Right ventricle myocardium superior (tissue), 1 donor: ENCODE measurements at regions of chr19 and their contacts with region 1.

Region 1: DNA sequence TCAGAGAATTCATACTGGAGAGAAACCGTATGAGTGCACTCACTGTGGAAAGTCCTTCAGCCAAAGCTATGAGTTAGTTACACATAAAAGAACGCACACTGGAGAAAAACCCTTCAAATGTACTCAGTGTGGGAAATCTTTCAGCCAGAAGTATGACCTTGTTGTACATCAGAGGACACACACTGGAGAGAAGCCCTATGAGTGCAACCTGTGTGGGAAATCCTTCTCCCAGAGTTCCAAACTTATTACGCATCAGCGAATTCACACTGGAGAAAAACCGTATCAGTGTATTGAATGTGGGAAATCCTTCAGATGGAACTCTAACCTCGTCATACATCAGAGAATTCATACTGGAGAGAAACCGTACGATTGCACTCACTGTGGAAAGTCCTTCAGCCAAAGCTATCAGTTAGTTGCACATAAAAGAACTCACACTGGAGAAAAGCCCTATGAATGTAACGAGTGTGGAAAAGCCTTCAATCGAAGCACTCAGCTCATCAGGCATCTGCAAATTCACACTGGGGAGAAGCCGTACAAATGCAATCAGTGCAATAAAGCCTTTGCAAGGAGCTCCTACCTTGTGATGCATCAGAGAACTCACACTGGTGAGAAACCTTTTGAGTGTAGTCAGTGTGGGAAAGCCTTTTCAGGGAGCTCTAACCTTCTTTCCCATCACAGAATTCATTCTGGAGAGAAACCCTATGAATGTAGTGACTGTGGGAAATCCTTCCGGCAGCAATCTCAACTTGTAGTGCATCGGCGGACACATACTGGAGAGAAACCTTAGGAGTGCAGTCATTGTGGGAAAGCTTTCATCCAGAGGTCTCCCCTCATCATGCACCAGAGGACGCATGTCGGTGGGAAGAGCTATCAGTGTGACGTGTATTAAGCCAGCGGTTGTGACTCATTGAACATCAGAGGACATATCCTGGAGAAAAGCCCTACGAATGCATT is 16.5 kb upstream of the ZNF8 start:
- DNase-seq: no peak
- ATAC-seq: no peak

Region 2: GRCh38 chr19:58128041-58128685 is 134.1 kb before region 1 on chr19:
- intact Hi-C with region 1: loop called (anchors 10 kb)
- DNase-seq: no peak
- ATAC-seq: no peak

Region 3: GRCh38 chr19:58196901-58197616 is 65.2 kb before region 1 on chr19:
- intact Hi-C with region 1: loop called (anchors 10 kb)
- DNase-seq: no peak
- ATAC-seq: no peak

Region 4: DNA sequence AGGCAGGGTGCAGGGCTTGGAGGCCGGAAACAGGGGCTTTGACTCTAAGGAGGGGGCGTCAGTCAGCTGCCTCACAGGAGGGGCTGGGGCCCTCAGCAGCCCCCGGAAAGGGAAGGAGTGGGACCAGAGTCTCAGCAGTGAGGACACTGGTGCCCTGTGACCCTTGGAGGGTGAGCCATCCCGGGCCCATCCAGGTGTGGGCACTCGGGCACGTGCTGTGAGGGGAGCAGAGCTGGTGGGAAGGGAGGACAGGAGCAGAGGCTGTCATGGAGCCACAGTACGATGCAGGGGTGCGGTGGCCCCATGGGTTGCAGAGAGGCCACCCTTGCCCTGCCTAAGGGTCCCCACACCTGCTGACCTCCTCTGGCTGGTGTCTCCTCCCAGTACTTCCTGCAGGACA is 52.7 kb before region 1 on chr19:
- intact Hi-C with region 1: no loop called
- DNase-seq: no peak
- ATAC-seq: no peak

Region 5: GRCh38 chr19:58305065-58305931 is 43.1 kb after region 1 on chr19 and contains the start of gene ERVK3-1:
- intact Hi-C with region 1: no loop called
- DNase-seq: peak; percentile 98
- ATAC-seq: peak; percentile 99
- total RNA-seq, gene ERVK3-1: 20.0 TPM